Activated T-helper 2 cell treated with anti-CD3 and anti-CD28 coated beads, Interferon-gamma antibody, Interleukin-2, Interleukin-4, amounts not matched to agents 10 μg/mL and 5 μg/mL and 100 μg/mL, durations not matched to agents 14 hours and 24 hours and 36 hours (primary cell): ENCODE measurements at regions of chr12 and their contacts with region 1.

Region 1: DNA sequence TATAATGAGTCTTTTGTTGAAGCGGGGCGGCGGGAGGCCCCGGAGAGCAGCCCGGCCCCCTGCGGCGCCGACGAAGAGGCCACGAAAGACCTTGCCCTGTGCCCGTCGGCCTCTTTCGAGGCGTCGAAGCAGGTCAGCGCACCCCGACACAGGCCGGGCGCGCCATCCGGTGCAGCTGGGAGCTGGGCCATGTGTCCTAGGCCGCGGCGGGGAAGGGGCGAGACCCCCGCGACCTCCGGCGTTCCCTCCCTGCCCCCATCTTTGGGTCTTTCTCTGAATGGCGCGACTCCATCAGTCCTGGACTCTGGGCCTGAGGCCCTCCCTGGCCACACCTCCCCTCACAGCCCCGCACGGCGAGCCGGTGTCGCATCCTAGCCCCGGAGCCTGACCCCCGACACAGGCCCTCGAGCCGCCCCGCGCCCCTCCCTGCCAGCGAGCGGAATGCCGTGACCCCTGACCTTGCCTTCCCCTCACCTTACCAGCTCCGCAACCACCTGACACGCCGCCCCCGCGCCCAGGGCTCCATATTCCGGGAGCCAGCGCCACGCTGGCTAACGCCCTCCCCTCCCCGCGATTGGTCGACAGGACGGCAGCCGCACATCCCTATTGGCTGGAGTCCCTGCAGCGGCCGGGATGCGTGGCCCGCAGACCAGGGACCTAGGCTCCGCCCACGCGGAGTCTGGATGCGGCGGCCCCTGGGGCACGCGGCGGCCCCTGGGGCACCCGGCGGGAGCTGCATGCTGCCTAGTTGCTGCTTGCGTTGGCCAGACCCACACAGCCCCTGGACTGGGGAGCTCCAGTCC is at the start of gene SLC11A2:
- DNase-seq: peak; percentile 89
- H3K4me3 Mint-ChIP-seq: peak within 1 kb of the TSS; percentile 98
- H3K27ac Mint-ChIP-seq: peak within 1 kb of the TSS; percentile 100
- H3K4me1 Mint-ChIP-seq: peaks cover 44% of the 10 kb centered on the region
- H3K27me3 Mint-ChIP-seq: peaks cover 7% of the 10 kb centered on the region
- total RNA-seq, gene SLC11A2: 56.6 and 62.9 TPM in 2 replicates

Region 2: DNA sequence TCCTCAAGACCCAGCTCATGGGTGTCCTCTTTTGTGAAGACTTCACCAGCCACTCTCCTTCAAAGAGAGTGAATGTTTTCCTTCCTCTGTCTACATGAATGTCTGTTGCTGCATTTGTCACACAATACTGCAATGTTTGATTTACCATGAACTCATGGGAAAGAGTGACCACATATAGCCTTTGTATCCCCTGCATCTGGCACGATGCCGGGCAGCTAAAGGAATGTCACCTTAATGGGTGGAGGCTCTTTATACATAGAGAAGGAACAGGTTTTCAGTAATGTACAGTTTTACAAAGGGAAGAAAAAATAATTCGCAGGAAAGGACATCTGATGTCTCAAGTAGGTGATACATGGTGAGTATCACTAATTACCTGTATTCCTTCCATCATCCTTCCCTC is 1171.0 kb before region 1 on chr12:
- intact Hi-C with region 1: no loop called
- DNase-seq: no peak
- H3K4me3 Mint-ChIP-seq: no peak overlapping the region
- H3K27ac Mint-ChIP-seq: no peak overlapping the region
- H3K4me1 Mint-ChIP-seq: peaks cover 5% of the 10 kb centered on the region
- H3K27me3 Mint-ChIP-seq: peaks cover 28% of the 10 kb centered on the region

Region 3: DNA sequence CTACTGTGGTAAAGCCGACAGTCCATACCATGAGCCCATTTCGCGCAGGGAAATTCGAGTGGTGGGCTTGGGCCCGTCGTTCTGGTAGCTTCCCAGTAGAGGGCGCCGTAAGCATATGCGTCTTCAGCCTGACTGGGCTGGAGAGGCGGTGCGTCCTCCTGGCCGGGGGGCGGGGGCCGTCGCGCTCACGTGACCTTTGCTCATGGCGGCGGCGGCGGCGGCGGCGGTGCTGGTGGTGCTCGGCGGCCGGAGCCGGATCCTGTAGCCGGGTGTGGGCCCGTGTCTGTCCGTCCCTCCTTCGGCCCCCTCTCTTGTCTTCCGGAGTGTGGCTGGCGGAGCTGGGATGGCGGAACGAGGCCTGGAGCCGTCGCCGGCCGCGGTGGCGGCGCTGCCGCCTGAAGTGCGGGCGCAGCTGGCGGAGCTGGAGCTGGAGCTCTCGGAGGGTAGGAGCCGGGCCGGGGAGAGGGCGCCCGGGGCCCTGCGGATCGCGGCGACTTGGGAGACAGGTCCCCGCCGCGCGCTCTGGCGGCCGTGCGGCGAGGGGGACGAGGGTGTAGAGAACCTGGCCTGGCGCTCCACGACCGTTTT is 521.1 kb before region 1 on chr12 and contains the start of gene DIP2B:
- intact Hi-C with region 1: loop called (anchors 10 kb)
- DNase-seq: peak; percentile 92
- H3K4me3 Mint-ChIP-seq: peak within 1 kb of the TSS; percentile 96
- H3K27ac Mint-ChIP-seq: peak within 1 kb of the TSS; percentile 93
- H3K4me1 Mint-ChIP-seq: peaks cover 45% of the 10 kb centered on the region
- H3K27me3 Mint-ChIP-seq: no peaks in the 10 kb centered on the region
- total RNA-seq, gene DIP2B: 27.4 and 29.1 TPM in 2 replicates

Region 4: GRCh38 chr12:50825372-50825838 is 200.6 kb before region 1 on chr12:
- intact Hi-C with region 1: loop called (anchors 1 kb)
- DNase-seq: no peak
- H3K4me3 Mint-ChIP-seq: no peak overlapping the region
- H3K27ac Mint-ChIP-seq: no peak overlapping the region
- H3K4me1 Mint-ChIP-seq: peaks cover 6% of the 10 kb centered on the region
- H3K27me3 Mint-ChIP-seq: no peaks in the 10 kb centered on the region

Region 5: DNA sequence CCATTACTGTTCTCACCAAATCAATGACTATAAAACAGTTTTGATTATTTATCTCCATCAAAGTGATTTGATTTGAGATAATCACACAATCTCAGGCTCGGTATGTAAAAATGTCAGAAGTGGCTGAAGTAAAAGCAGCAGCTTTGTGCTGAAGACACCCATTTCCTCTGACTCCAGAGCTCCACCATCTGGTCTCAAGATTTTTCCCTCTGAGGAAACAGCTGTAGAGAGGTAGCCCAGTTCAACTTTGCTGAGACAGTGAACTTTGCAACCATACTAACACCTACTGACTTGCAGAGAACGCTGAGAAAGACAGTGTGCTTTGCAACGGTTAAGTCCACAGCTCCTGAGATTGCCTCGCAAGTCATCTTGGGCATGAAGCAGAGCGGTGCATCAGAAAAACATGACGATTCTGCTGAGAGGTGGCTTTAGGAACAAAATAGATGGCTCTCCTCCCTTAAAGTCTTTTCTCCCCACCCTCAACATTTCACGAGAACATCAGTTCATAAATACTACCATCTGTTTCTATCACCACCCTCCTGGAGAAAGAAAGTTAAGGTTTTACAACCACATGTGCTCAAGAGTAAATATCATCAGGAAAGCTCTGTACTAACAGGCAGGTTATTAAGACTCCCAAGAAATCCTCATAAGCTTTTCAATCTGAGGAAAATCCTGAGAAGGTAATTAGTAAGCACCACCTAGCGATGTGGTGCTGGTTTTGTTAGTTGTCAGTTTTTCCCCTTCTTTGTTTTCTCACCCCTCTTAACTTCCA is 38.9 kb before region 1 on chr12:
- intact Hi-C with region 1: loop called (anchors 2 kb)
- DNase-seq: no peak
- H3K4me3 Mint-ChIP-seq: no peak overlapping the region
- H3K27ac Mint-ChIP-seq: peak overlapping the region; percentile 24
- H3K4me1 Mint-ChIP-seq: peaks cover 31% of the 10 kb centered on the region
- H3K27me3 Mint-ChIP-seq: no peaks in the 10 kb centered on the region

Region 6: DNA sequence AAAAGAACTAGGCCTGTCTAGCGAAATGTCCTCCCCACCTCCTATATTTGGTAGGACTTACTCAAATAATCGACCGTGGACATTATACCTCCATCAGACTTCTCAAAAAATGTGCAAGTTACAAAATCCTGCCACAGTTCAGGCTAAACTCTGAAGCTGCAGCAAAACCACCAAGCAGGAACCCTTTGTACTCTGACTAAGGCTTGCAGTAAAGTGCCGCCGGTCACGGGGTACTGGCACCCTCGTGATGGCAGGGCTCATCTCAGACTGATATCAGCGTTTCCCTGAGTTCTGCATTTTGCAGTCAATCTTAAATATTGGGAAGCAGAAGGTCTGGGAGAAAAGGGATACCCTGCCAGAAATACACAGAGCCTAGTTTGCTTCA is 17.0 kb before region 1 on chr12:
- intact Hi-C with region 1: loop called (anchors 1 kb)
- DNase-seq: no peak
- H3K4me3 Mint-ChIP-seq: peak overlapping the region; percentile 62
- H3K27ac Mint-ChIP-seq: peak overlapping the region; percentile 54
- H3K4me1 Mint-ChIP-seq: peaks cover 31% of the 10 kb centered on the region
- H3K27me3 Mint-ChIP-seq: no peaks in the 10 kb centered on the region

Region 7: GRCh38 chr12:51047655-51048540 is 21.9 kb after region 1 on chr12 and contains the start of gene LETMD1:
- intact Hi-C with region 1: loop called (anchors 1 kb)
- DNase-seq: peak; percentile 92
- H3K4me3 Mint-ChIP-seq: peak within 1 kb of the TSS; percentile 92
- H3K27ac Mint-ChIP-seq: peak within 1 kb of the TSS; percentile 83
- H3K4me1 Mint-ChIP-seq: peaks cover 22% of the 10 kb centered on the region
- H3K27me3 Mint-ChIP-seq: no peaks in the 10 kb centered on the region
- total RNA-seq, gene LETMD1: 61.0 and 63.1 TPM in 2 replicates

Region 8: GRCh38 chr12:51083126-51083833 is 57.2 kb after region 1 on chr12 and contains the start of gene CSRNP2:
- intact Hi-C with region 1: loop called (anchors 2 kb)
- DNase-seq: peak; percentile 94
- H3K4me3 Mint-ChIP-seq: peak within 1 kb of the TSS; percentile 98
- H3K27ac Mint-ChIP-seq: peak within 1 kb of the TSS; percentile 90
- H3K4me1 Mint-ChIP-seq: peaks cover 38% of the 10 kb centered on the region
- H3K27me3 Mint-ChIP-seq: no peaks in the 10 kb centered on the region
- total RNA-seq, gene CSRNP2: 28.3 and 31.2 TPM in 2 replicates